Gastrocnemius medialis (tissue), 4 donors: ENCODE measurements at regions of chr17 and their contacts with region 1.

Region 1: DNA sequence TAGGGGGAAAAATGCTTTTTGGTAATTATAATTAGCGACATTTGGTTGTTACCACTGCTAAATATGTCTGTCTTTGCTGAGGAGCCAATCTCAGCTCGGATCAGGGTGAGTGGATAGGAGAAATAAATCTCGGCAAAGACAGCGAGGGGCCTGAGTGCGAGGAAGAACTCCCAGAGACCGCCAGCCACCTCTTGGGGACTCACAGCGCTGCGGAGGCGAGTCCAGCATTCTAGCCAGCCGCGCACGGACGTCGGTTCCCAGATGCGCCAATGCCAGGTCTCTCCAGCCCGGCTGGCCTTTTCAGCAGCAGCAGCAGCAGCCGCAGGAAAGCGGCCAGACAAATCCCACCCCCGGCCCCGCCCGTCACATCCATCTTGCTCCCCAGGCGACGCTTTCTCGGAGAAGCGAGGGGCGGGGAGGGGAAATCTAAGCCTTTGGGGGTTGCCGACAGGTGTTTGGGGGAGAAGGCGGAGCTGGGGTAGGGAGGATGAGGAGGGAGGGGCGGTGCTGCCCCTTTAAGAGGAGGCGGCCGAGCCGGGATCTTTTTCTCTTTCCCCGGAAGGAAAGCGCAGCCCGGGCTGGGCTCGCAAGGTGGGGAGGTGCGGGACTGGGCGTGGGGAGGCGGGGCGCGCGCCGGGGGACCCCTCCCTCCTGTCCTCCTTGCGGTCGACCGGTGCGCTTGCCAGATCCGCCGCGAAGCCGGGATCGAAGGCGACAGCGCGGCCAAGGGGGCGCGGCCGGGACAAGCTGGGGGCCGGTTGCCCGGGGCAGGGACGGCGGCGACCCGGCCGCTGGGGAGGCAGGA is at the start of gene ITGA3:
- DNase-seq: peak in 1 of 2 donors; percentile 55
- ATAC-seq: peak; percentile 20 to 25
- H3K4me3 ChIP-seq: peak within 1 kb of the TSS; percentile 71 to 96 (median 82)
- H3K27ac ChIP-seq: peak within 1 kb of the TSS; percentile 86 to 96 (median 92)
- H3K4me1 ChIP-seq: peaks cover 47 to 49% of the 10 kb centered on the region in 2 donors
- H3K27me3 ChIP-seq: no peaks in the 10 kb centered on the region
- CTCF ChIP-seq: no peak
- POLR2A ChIP-seq: peak; percentile 39 to 54
- total RNA-seq, gene ITGA3: 5.1 to 25.9 (median 18.4) TPM

Region 2: GRCh38 chr17:50026901-50027630 is 28.6 kb before region 1 on chr17:
- in situ Hi-C with region 1: no loop called
- intact Hi-C with region 1: loop called (anchors 1 kb)
- DNase-seq: peak; percentile 59 to 69
- ATAC-seq: peak; percentile 83 to 85
- H3K4me3 ChIP-seq: no peak overlapping the region
- H3K27ac ChIP-seq: no peak overlapping the region
- H3K4me1 ChIP-seq: peaks cover 0 to 5% of the 10 kb centered on the region in 2 donors
- H3K27me3 ChIP-seq: no peaks in the 10 kb centered on the region
- CTCF ChIP-seq: peak; percentile 89 to 98 (median 97)
- POLR2A ChIP-seq: no peak

Region 3: GRCh38 chr17:50079334-50080095 is 23.9 kb after region 1 on chr17:
- in situ Hi-C with region 1: no loop called
- intact Hi-C with region 1: loop called (anchors 2 kb)
- DNase-seq: peak in 1 of 2 donors; percentile 34
- ATAC-seq: peak in 1 of 2 donors; percentile 22
- H3K4me3 ChIP-seq: no peak overlapping the region
- H3K27ac ChIP-seq: peak overlapping the region; percentile 71 to 82 (median 78)
- H3K4me1 ChIP-seq: peaks cover 19 to 20% of the 10 kb centered on the region in 2 donors
- H3K27me3 ChIP-seq: no peaks in the 10 kb centered on the region
- CTCF ChIP-seq: peak; percentile 30 to 51 (median 50)
- POLR2A ChIP-seq: no peak